ENCODE measurements at regions of chr3 and their contacts with region 1.

Region 1: GRCh38 chr3:10248184-10249080 is at the start of gene TATDN2:
- DNase-seq: peak; percentile 95
- H3K4me3 ChIP-seq: peak within 1 kb of the TSS; percentile 20 to 62 (median 58)
- H3K27ac ChIP-seq: peak within 1 kb of the TSS; percentile 18
- H3K4me1 ChIP-seq: peaks cover 14% of the 10 kb centered on the region
- H3K27me3 ChIP-seq: no peaks in the 10 kb centered on the region
- CTCF ChIP-seq: no peak
- POLR2A ChIP-seq: peak; percentile 97
- total RNA-seq, gene TATDN2: 26.8 and 31.7 TPM in 2 replicates

Region 2: GRCh38 chr3:9890249-9891071 is 358.0 kb before region 1 on chr3 and contains the start of gene JAGN1:
- CTCF ChIA-PET with region 1: no interaction called
- POLR2A ChIA-PET with region 1: no interaction called
- dilution Hi-C with region 1: no loop called
- intact Hi-C with region 1: loop called (anchors 2 kb)
- DNase-seq: peak; percentile 92
- H3K4me3 ChIP-seq: peak within 1 kb of the TSS; percentile 82 to 92 (median 89)
- H3K27ac ChIP-seq: peak within 1 kb of the TSS; percentile 76
- H3K4me1 ChIP-seq: peaks cover 25% of the 10 kb centered on the region
- H3K27me3 ChIP-seq: no peaks in the 10 kb centered on the region
- CTCF ChIP-seq: no peak
- POLR2A ChIP-seq: peak; percentile 95
- total RNA-seq, gene JAGN1: 29.6 and 31.4 TPM in 2 replicates

Region 3: GRCh38 chr3:10026084-10026890 is 222.1 kb before region 1 on chr3 and contains the start of gene FANCD2:
- CTCF ChIA-PET with region 1: no interaction called
- POLR2A ChIA-PET with region 1: no interaction called
- dilution Hi-C with region 1: no loop called
- intact Hi-C with region 1: loop called (anchors 2 kb)
- DNase-seq: peak; percentile 92
- H3K4me3 ChIP-seq: peak within 1 kb of the TSS; percentile 55 to 84 (median 81)
- H3K27ac ChIP-seq: peak within 1 kb of the TSS; percentile 88
- H3K4me1 ChIP-seq: peaks cover 13% of the 10 kb centered on the region
- H3K27me3 ChIP-seq: no peaks in the 10 kb centered on the region
- CTCF ChIP-seq: no peak
- POLR2A ChIP-seq: peak; percentile 79
- total RNA-seq, gene FANCD2: 23.4 and 26.8 TPM in 2 replicates

Region 4: DNA sequence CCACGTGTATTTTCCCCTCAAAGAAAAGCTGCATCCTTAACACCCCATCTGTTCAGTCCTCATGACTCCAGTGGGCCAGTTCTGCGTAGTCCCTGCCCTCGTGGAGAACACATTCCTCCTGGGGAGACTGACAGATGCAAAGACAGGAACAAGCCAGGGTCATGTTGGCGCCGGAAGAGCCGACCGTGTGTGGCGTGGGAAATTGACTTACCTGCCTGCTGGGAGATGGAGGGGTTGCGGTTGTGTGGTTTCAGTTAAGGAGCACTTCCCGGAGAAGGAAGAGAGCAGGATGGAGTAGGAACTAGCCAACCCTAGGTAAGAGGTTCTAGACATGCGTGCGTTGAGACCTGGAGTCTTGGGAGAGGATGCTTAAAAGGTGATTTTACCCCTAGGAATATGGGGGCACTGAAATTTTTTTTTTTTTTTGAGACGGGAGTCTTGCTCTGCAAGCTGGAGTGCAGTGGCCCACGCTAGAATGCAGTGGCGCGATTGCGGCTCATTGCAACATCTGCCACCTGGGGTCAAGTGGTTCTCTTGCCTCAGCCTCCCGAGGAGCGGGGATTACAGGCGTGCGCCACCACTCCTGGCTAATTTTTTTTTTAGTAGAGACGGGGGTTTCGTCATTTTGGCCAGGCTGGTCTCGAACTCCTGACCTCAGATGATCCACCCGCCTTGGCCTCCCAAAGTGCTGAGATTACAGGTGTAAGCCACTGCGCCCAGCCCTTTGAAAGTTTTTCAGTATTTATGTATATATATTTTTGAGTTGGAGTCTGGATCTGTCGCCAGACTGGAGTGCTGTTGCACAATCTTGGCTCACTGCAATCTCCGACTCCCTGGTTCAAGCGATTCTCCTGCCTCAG is 105.5 kb before region 1 on chr3:
- CTCF ChIA-PET with region 1: interaction called, 3 read pairs
- POLR2A ChIA-PET with region 1: no interaction called
- dilution Hi-C with region 1: no loop called
- intact Hi-C with region 1: loop called (anchors 2 kb)
- DNase-seq: no peak
- H3K4me3 ChIP-seq: peak overlapping the region; percentile 52 to 74 (median 60)
- H3K27ac ChIP-seq: no peak overlapping the region
- H3K4me1 ChIP-seq: peaks cover 11% of the 10 kb centered on the region
- H3K27me3 ChIP-seq: no peaks in the 10 kb centered on the region
- CTCF ChIP-seq: no peak
- POLR2A ChIP-seq: no peak

Region 5: GRCh38 chr3:10263646-10264363 is 15.4 kb after region 1 on chr3:
- CTCF ChIA-PET with region 1: interaction called, 23 read pairs
- POLR2A ChIA-PET with region 1: interaction called, 3 read pairs
- dilution Hi-C with region 1: no loop called
- intact Hi-C with region 1: no loop called
- DNase-seq: peak; percentile 42
- H3K4me3 ChIP-seq: no peak overlapping the region
- H3K27ac ChIP-seq: no peak overlapping the region
- H3K4me1 ChIP-seq: peaks cover 16% of the 10 kb centered on the region
- H3K27me3 ChIP-seq: no peaks in the 10 kb centered on the region
- CTCF ChIP-seq: peak; percentile 35 to 37
- POLR2A ChIP-seq: no peak

Region 6: GRCh38 chr3:10310578-10310977 is 62.1 kb after region 1 on chr3:
- CTCF ChIA-PET with region 1: no interaction called
- POLR2A ChIA-PET with region 1: no interaction called
- dilution Hi-C with region 1: no loop called
- intact Hi-C with region 1: loop called (anchors 5 kb)
- DNase-seq: no peak
- H3K4me3 ChIP-seq: no peak overlapping the region
- H3K27ac ChIP-seq: peak overlapping the region; percentile 73
- H3K4me1 ChIP-seq: peaks cover 48% of the 10 kb centered on the region
- H3K27me3 ChIP-seq: no peaks in the 10 kb centered on the region
- CTCF ChIP-seq: no peak
- POLR2A ChIP-seq: no peak